ENCODE measurements at regions of chr10 and their contacts with region 1.

Region 1: GRCh38 chr10:97686962-97687784 is at the start of gene AVPI1:
- DNase-seq: peak; percentile 82 to 97 (median 94)
- ATAC-seq: peak; percentile 90 to 97 (median 91)
- H3K4me3 ChIP-seq: peak within 1 kb of the TSS; percentile 71 to 76
- H3K4me3 Mint-ChIP-seq: peak within 1 kb of the TSS; percentile 82 to 88 (median 85)
- H3K27ac ChIP-seq: peak within 1 kb of the TSS; percentile 70
- H3K27ac Mint-ChIP-seq: peak within 1 kb of the TSS; percentile 47 to 79
- H3K4me1 ChIP-seq: peaks cover 0 to 25% of the 10 kb centered on the region in 2 experiments
- H3K4me1 Mint-ChIP-seq: peaks cover 18 to 32% (median 22%) of the 10 kb centered on the region in 3 donors
- H3K27me3 ChIP-seq: no peaks in the 10 kb centered on the region
- H3K27me3 Mint-ChIP-seq: no peaks in the 10 kb centered on the region
- total RNA-seq, gene AVPI1: 2.4 to 10.0 (median 3.6) TPM

Region 2: DNA sequence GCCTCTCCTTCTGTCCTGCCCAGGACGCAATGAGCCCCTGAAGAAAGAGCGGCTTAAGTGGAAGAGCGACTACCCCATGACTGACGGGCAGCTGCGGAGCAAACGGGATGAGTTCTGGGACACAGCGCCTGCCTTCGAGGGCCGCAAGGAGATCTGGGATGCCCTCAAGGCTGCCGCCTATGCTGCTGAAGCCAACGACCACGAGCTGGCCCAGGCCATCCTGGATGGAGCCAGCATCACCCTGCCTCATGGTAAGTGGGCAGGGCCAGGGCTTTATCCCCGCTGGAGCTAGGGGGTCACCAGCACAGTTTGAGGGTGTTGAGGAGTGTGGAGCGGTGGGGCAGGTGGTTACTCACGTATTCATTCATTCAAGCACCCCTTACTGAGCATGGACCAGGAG is 119.3 kb before region 1 on chr10:
- CTCF ChIA-PET with region 1: no interaction called
- POLR2A ChIA-PET with region 1: no interaction called
- DNase-seq: no peak
- ATAC-seq: no peak
- H3K4me3 ChIP-seq: no peak overlapping the region
- H3K4me3 Mint-ChIP-seq: no peak overlapping the region
- H3K27ac ChIP-seq: no peak overlapping the region
- H3K27ac Mint-ChIP-seq: no peak overlapping the region
- H3K4me1 ChIP-seq: no peaks in the 10 kb centered on the region
- H3K4me1 Mint-ChIP-seq: no peaks in the 10 kb centered on the region
- H3K27me3 ChIP-seq: no peaks in the 10 kb centered on the region
- H3K27me3 Mint-ChIP-seq: no peaks in the 10 kb centered on the region

Region 3: GRCh38 chr10:97676770-97677581 is 10.2 kb before region 1 on chr10:
- CTCF ChIA-PET with region 1: interaction called, 13 to 21 read pairs
- POLR2A ChIA-PET with region 1: interaction called in 1 of 2 experiments, 3 read pairs
- DNase-seq: peak in 34 of 35 experiments; percentile 4 to 79 (median 41)
- ATAC-seq: peak; percentile 83 to 87 (median 86)
- H3K4me3 ChIP-seq: no peak overlapping the region
- H3K4me3 Mint-ChIP-seq: no peak overlapping the region
- H3K27ac ChIP-seq: no peak overlapping the region
- H3K27ac Mint-ChIP-seq: peak overlapping the region in 1 of 2 donors; percentile 71
- H3K4me1 ChIP-seq: peaks cover 0 to 4% of the 10 kb centered on the region in 2 experiments
- H3K4me1 Mint-ChIP-seq: peaks cover 0 to 2% (median 2%) of the 10 kb centered on the region in 3 donors
- H3K27me3 ChIP-seq: no peaks in the 10 kb centered on the region
- H3K27me3 Mint-ChIP-seq: no peaks in the 10 kb centered on the region

Region 4: DNA sequence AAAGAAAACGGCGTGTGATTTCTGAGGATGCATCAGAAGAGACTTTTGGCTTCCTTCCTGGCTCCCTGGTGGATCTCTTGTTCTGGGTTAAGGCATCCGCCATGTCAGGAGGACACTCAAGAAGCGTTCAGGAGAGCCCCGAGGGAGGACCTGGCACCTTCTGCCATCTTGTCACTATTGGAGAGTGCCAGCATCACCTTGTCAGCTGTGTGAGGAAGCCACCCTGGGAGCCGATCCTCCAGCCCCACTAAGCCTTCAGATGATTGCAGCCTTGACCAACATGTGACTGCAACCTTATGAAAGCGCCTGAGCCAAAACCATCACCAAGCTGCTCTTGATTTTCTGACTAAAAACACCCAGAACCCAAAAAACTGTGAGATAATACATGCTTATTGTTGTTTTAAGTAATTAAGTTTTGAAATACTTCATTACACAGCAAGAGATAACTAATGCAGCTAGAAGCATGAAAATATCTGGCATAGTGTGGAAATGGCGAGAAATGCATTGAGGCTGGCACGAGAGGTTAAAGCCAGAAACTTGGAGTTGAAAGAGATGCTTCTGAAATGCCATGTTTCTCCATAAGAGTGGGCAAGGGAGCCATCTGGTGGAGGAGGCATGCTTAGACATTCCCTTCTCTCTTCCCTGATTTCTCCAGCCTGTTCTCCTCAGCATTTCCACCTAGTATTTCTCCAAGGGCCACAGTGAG is 44.3 kb after region 1 on chr10:
- CTCF ChIA-PET with region 1: interaction called in 1 of 2 experiments, 13 read pairs
- POLR2A ChIA-PET with region 1: interaction called, 4 to 10 read pairs
- DNase-seq: peak in 27 of 35 experiments; percentile 13 to 81 (median 44)
- ATAC-seq: peak; percentile 53 to 69 (median 60)
- H3K4me3 ChIP-seq: no peak overlapping the region
- H3K4me3 Mint-ChIP-seq: no peak overlapping the region
- H3K27ac ChIP-seq: no peak overlapping the region
- H3K27ac Mint-ChIP-seq: no peak overlapping the region
- H3K4me1 ChIP-seq: peaks cover 0 to 5% of the 10 kb centered on the region in 2 experiments
- H3K4me1 Mint-ChIP-seq: peaks cover 6 to 11% (median 11%) of the 10 kb centered on the region in 3 donors
- H3K27me3 ChIP-seq: peaks cover 0 to 15% of the 10 kb centered on the region in 2 experiments
- H3K27me3 Mint-ChIP-seq: peaks cover 0 to 13% of the 10 kb centered on the region in 2 donors

Region 5: GRCh38 chr10:97736902-97737769 is 50.0 kb after region 1 on chr10 and contains the start of gene ZFYVE27:
- CTCF ChIA-PET with region 1: interaction called in 1 of 2 experiments, 13 read pairs
- POLR2A ChIA-PET with region 1: interaction called, 4 to 10 read pairs
- DNase-seq: peak; percentile 85 to 98 (median 92)
- ATAC-seq: peak; percentile 88 to 94 (median 91)
- H3K4me3 ChIP-seq: peak within 1 kb of the TSS; percentile 91 to 96
- H3K4me3 Mint-ChIP-seq: peak within 1 kb of the TSS; percentile 92 to 93 (median 93)
- H3K27ac ChIP-seq: peak within 1 kb of the TSS; percentile 89
- H3K27ac Mint-ChIP-seq: peak within 1 kb of the TSS; percentile 94 to 96
- H3K4me1 ChIP-seq: peaks cover 6 to 36% of the 10 kb centered on the region in 2 experiments
- H3K4me1 Mint-ChIP-seq: peaks cover 53 to 61% (median 57%) of the 10 kb centered on the region in 3 donors
- H3K27me3 ChIP-seq: no peaks in the 10 kb centered on the region
- H3K27me3 Mint-ChIP-seq: no peaks in the 10 kb centered on the region
- total RNA-seq, gene ZFYVE27: 57.6 to 68.0 (median 60.0) TPM

Measured in T-cell (primary cell).